ENCODE measurements at regions of chr11 and their contacts with region 1.

Region 1: DNA sequence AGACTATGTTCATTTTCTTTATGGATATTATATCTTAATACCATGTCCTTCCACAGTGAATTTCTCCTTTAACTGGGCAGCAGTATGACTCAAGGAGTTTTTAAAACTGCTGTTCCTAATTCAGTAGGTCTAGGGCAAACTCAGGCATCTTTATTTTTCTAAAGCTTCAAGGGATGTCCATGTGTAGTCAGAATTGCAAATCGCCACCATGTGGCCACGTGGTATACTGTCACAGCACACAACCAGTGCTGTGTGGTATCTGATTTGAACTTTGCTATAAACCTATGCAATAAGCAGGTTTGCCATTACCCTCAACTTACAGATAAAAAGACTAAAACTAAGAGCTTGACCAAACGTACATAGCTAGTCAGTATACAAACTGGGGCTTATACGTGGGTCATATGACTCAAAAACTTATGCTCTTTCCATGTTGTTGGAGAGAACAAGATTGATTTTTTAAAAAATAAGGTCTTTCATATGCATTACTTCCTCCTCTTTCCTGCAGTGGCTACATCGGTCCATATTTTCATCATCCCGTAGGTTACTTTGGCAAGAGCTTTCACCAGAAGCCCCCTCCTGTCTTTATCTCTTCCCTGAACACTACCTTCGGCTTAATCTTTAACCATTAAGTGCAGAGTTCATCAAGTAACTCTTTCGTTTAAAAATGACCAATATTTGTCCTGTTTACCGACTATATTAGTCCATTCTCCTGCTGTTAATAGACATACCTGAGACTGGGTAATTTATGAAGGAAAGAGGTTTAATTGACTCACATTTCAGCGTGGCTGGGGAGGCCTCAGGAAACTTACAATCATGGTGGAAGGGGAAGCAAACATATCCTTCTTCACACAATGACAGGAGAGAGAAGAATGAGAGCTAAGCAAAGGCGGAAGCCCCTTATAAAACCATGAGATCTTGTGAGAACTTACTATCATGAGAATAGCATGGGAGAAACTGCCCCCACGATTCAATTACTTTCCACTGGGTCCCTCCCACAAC is 8.0 kb upstream of the HTATIP2 start:
- DNase-seq: no peak
- ATAC-seq: peak; percentile 80
- H3K4me3 Mint-ChIP-seq: no peak overlapping the region
- H3K27ac Mint-ChIP-seq: no peak overlapping the region
- H3K4me1 Mint-ChIP-seq: peaks cover 8% of the 10 kb centered on the region
- H3K27me3 Mint-ChIP-seq: peaks cover 7% of the 10 kb centered on the region
- CTCF ChIP-seq: no peak

Region 2: GRCh38 chr11:19938169-19938856 is 417.2 kb before region 1 on chr11:
- CTCF ChIA-PET with region 1: no interaction called
- POLR2A ChIA-PET with region 1: no interaction called
- intact Hi-C with region 1: loop called (anchors 2 kb)
- DNase-seq: no peak
- ATAC-seq: peak; percentile 56
- H3K4me3 Mint-ChIP-seq: no peak overlapping the region
- H3K27ac Mint-ChIP-seq: no peak overlapping the region
- H3K4me1 Mint-ChIP-seq: peaks cover 8% of the 10 kb centered on the region
- H3K27me3 Mint-ChIP-seq: peaks cover 9% of the 10 kb centered on the region
- CTCF ChIP-seq: no peak

Region 3: DNA sequence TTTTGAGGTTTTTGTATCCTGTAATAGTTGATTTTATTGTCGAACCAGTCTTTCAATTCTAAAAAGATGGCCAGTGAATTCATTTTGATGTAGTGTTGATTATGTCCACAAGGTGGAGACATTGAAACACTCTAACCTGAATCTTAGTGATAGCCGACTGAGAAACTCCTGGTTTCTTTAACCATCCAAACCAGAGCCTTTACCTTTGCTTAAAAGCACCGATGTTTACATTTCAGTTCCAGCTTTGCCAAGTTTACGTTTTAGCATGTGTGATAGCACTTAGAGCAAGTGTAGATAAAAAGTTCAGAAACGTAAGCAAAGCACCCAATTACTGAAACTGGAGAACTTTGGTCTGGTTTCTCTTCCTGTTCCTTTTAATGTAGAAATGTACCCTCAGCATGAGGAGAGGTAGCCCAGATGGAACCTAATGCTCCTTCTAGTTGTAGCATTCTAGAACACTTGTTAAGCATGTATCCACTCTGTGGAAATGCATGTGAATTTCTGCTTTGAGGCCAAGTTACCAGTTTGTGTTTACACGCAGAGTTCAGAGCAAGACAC is 403.9 kb before region 1 on chr11:
- CTCF ChIA-PET with region 1: no interaction called
- POLR2A ChIA-PET with region 1: no interaction called
- intact Hi-C with region 1: loop called (anchors 2 kb)
- DNase-seq: no peak
- ATAC-seq: peak; percentile 68
- H3K4me3 Mint-ChIP-seq: peak overlapping the region; percentile 74
- H3K27ac Mint-ChIP-seq: no peak overlapping the region
- H3K4me1 Mint-ChIP-seq: peaks cover 10% of the 10 kb centered on the region
- H3K27me3 Mint-ChIP-seq: peaks cover 15% of the 10 kb centered on the region
- CTCF ChIP-seq: no peak

Region 4: GRCh38 chr11:20058749-20059458 is 296.6 kb before region 1 on chr11:
- CTCF ChIA-PET with region 1: no interaction called
- POLR2A ChIA-PET with region 1: no interaction called
- intact Hi-C with region 1: no loop called
- DNase-seq: no peak
- ATAC-seq: no peak
- H3K4me3 Mint-ChIP-seq: no peak overlapping the region
- H3K27ac Mint-ChIP-seq: no peak overlapping the region
- H3K4me1 Mint-ChIP-seq: no peaks in the 10 kb centered on the region
- H3K27me3 Mint-ChIP-seq: no peaks in the 10 kb centered on the region
- CTCF ChIP-seq: no peak

Measured in activated B cell treated with CpG ODN at 0.5 μM for 24 hours (primary cell).